Dorsolateral prefrontal cortex (tissue), 120 donors: ENCODE measurements at regions of chr1 and their contacts with region 1.

Region 1: GRCh38 chr1:158203693-158204457 is 23.2 kb downstream of the CD1D start:
- DNase-seq: no peak
- H3K4me3 ChIP-seq: peak overlapping the region in 1 of 59 donors; percentile 4
- H3K27ac ChIP-seq: no peak overlapping the region
- H3K27me3 ChIP-seq: peaks cover 0 to 12% (median 0%) of the 10 kb centered on the region in 45 donors
- CTCF ChIP-seq: peak; percentile 79 to 97 (median 90)

Region 2: DNA sequence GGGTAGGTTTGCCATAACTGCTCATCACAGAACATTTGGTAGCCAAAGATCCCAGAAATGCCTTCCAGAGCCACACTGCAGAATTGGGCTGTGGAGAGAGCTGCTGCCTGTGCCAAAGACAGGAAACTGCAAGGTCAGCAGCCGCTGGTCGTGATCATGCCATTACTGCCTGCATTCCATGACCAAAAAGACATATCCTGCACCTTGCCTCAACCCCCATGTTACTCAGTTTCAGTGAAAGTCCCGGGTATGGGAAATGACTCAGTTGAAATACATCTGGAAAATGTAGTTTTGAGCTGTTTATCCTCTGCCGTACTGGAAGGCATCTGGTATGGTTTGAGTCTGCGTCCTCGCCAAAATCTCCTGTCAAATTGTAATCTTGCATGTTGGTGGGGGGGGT is 813.2 kb before region 1 on chr1:
- intact Hi-C with region 1: no loop called
- DNase-seq: no peak
- H3K4me3 ChIP-seq: no peak overlapping the region
- H3K27ac ChIP-seq: no peak overlapping the region
- H3K27me3 ChIP-seq: peaks cover 0 to 29% (median 0%) of the 10 kb centered on the region in 45 donors
- CTCF ChIP-seq: no peak

Region 3: GRCh38 chr1:158496374-158496773 is 292.5 kb after region 1 on chr1:
- intact Hi-C with region 1: loop called in 1 of 2 experiments (anchors 10 kb)
- DNase-seq: no peak
- H3K4me3 ChIP-seq: peak overlapping the region in 1 of 59 donors; percentile 1
- H3K27ac ChIP-seq: no peak overlapping the region
- H3K27me3 ChIP-seq: peaks cover 0 to 6% (median 0%) of the 10 kb centered on the region in 45 donors
- CTCF ChIP-seq: peak in 45 of 56 donors; percentile 10 to 67 (median 41)

Region 4: DNA sequence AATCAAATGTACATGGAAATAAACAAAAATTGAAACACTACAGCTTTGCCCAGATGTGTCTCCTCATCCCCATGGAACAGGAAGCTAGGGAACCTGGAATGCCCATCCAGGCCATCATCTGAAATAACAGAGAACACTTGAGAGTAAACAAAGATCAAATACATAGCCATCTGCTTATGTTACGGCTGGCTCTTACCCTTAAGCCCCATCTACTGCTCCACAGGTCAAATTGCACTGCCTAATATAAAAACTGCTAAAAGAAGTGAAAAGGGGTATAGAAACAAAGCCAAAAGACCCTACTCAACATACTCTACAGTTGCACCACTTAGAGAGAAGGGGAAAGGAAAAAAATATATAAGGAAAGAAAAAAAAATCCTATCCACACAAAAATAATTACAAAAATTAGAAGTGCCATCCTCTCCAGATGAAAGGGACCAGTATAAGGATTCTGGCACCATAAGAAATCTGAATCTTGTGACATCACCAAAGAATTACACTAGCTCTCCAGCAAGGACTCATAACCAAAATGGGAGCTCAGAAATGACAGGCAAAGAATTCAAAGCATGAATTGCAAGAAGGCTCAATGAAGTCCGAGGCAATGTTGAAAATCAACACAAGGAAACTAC is 323.4 kb after region 1 on chr1:
- intact Hi-C with region 1: loop called in 1 of 2 experiments (anchors 10 kb)
- DNase-seq: no peak
- H3K4me3 ChIP-seq: no peak overlapping the region
- H3K27ac ChIP-seq: no peak overlapping the region
- H3K27me3 ChIP-seq: no peaks in the 10 kb centered on the region
- CTCF ChIP-seq: peak in 42 of 56 donors; percentile 18 to 83 (median 48)

Region 5: DNA sequence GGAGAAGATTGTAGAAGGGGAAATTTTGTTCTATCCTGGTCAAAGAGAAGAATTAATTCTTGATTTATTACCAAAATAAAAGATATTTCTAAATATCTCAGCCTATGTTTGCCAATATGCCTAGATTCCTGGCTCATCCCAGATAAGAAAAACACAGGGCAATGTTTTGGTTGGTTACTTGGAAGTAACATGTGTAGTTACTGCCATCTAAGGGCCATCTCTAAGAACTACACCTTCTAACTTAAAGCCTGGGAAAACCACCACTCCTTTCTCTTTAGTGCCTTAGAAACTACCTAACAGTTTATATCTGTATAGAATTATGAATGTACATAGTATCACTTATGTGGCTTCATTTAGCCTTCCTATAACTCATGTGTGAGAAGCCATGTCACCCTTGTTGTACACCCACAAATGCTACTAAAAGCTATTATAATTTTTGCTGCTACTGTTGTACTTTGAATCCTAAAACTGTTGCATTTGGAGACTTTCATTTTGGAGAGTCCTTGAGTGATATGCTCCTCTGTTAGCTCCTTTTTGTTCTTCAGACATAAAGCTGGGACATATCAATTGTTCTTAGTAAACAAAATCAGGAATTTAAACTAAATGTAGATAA is 868.2 kb after region 1 on chr1:
- intact Hi-C with region 1: loop called (anchors 5 to 10 kb)
- DNase-seq: no peak
- H3K4me3 ChIP-seq: no peak overlapping the region
- H3K27ac ChIP-seq: no peak overlapping the region
- H3K27me3 ChIP-seq: peaks cover 0 to 5% (median 0%) of the 10 kb centered on the region in 45 donors
- CTCF ChIP-seq: peak; percentile 43 to 92 (median 82)